K562 (cell line): ENCODE measurements at regions of chr1 and their contacts with region 1.

Region 1: GRCh38 chr1:226479416-226479861 is 69.1 kb upstream of the STUM start:
- DNase-seq: no peak
- ATAC-seq: no peak
- H3K4me3 ChIP-seq: no peak overlapping the region
- H3K27ac ChIP-seq: no peak overlapping the region
- H3K4me1 ChIP-seq: no peaks in the 10 kb centered on the region
- H3K27me3 ChIP-seq: peaks cover 53 to 77% of the 10 kb centered on the region in 2 experiments
- CTCF ChIP-seq: no peak
- EP300 ChIP-seq: no peak
- POLR2A ChIP-seq: no peak
- RAD21 ChIP-seq: no peak

Region 2: GRCh38 chr1:226019572-226019971 is 459.9 kb before region 1 on chr1:
- CTCF ChIA-PET with region 1: no interaction called
- POLR2A ChIA-PET with region 1: no interaction called
- in situ Hi-C with region 1: no loop called
- intact Hi-C with region 1: no loop called
- DNase-seq: no peak
- ATAC-seq: no peak
- H3K4me3 ChIP-seq: no peak overlapping the region
- H3K27ac ChIP-seq: no peak overlapping the region
- H3K4me1 ChIP-seq: peaks cover 5 to 8% of the 10 kb centered on the region in 2 experiments; a peak in 3 of 5 replicates
- H3K27me3 ChIP-seq: no peaks in the 10 kb centered on the region
- CTCF ChIP-seq: no peak
- EP300 ChIP-seq: no peak
- POLR2A ChIP-seq: no peak
- RAD21 ChIP-seq: no peak

Region 3: GRCh38 chr1:226489718-226490425 is 10.4 kb after region 1 on chr1:
- CTCF ChIA-PET with region 1: no interaction called
- POLR2A ChIA-PET with region 1: interaction called, 11 read pairs
- in situ Hi-C with region 1: no loop called
- intact Hi-C with region 1: no loop called
- DNase-seq: no peak
- ATAC-seq: no peak
- H3K4me3 ChIP-seq: no peak overlapping the region
- H3K27ac ChIP-seq: no peak overlapping the region
- H3K4me1 ChIP-seq: no peaks in the 10 kb centered on the region
- H3K27me3 ChIP-seq: peaks cover 44 to 66% of the 10 kb centered on the region in 2 experiments
- CTCF ChIP-seq: no peak
- EP300 ChIP-seq: no peak
- POLR2A ChIP-seq: no peak
- RAD21 ChIP-seq: no peak